AG04450 (cell line): ENCODE measurements at regions of chr6 and their contacts with region 1.

Region 1: DNA sequence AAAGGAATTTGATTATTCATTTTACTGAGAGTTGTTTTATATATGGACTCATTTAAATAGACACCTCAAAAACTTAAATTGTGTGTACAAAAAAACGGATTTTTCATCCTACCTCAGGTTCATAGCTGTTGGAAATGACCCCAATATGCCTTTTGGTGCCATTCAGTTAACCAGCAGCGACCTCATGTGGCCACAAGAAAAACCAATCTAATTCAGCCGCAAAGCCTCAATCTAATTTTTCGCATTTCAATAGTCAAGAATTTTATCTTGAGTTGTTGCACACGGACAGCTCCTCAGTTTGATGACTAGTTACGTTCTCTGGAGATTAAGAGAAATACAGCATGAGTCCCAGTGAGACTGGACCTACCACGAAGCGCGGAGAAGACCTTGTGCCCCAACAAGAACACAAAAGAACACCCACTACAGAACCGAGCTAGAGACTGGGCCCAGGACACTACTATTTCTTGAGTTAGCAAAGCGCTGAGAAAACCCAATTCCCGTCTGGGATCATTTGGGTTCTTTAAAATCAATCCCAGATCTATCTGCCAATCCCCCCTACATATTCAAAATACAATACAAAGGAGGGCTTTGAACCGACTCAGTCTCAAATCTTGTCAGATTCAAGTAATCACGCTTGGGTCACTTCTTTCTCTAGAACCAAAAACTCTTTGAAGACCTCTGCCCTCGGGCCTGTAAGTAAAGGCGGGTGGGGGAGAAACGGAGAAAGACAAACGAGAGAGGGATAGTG is 1.1 kb downstream of the TCP11 start:
- DNase-seq: peak; percentile 56
- H3K4me3 ChIP-seq: no peak overlapping the region
- H3K27ac ChIP-seq: no peak overlapping the region
- H3K27me3 ChIP-seq: no peaks in the 10 kb centered on the region
- CTCF ChIP-seq: peak; percentile 80

Region 2: DNA sequence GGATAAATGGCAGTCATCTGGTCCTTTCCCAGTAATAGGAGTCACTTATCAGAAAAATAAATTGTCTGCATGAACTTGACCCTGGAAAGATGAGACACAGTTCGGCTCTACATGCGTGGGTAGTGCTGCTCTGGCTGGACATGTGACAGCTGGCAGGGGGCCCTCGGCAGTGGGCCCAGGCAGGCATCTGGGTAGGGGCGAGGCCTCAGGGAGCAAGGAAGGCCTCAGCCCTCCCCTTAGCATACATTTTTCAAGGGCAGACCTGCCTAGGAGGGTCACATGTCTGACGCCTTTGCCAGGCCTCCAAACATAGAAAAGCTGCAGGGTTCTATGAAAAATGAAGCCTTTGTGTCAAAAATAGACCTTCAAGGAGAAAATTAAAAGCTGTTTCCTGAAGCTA is 430.7 kb before region 1 on chr6:
- CTCF ChIA-PET with region 1: no interaction called
- POLR2A ChIA-PET with region 1: no interaction called
- DNase-seq: peak; percentile 33
- H3K4me3 ChIP-seq: no peak overlapping the region
- H3K27ac ChIP-seq: no peak overlapping the region
- H3K27me3 ChIP-seq: no peaks in the 10 kb centered on the region
- CTCF ChIP-seq: no peak

Region 3: DNA sequence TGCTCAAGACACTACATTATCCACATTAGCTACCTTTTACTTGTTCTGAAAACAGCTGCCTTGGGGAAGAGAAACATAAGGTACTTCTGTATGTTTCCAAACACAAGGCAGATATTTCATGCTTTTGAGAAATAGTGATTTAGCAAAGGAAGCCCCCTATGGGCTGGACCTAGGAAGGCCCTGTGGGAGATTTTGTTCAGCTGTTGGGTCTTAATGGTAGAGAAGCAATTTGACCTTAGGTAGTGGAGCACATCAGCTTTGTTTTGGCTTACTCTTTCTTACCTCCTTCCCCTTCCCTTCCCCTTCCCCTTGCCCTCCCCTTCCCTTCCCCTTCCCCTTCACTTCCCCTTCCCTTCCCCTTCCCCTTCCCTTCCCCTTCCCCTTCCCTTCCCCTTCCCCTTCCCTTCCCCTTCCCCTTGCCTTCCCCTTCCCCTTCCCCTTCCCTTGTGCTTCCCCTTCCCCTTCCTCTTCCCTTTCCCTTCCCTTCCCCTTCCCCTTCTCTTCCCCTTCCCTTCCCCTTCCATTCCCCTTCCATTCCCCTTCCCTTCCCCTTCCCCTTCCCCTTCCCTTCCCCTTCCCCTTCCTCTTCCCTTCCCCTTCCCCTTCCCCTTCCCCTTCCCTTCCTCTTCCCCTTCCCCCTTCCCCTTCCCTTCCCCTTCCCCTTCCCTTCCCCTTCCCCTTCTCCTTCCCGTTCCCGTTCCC is 166.4 kb before region 1 on chr6:
- CTCF ChIA-PET with region 1: interaction called, 19 read pairs
- POLR2A ChIA-PET with region 1: no interaction called
- DNase-seq: no peak
- H3K4me3 ChIP-seq: no peak overlapping the region
- H3K27ac ChIP-seq: no peak overlapping the region
- H3K27me3 ChIP-seq: no peaks in the 10 kb centered on the region
- CTCF ChIP-seq: 0 out of 2 replicates have a peak, but pooled peaks have one; percentile 9

Region 4: DNA sequence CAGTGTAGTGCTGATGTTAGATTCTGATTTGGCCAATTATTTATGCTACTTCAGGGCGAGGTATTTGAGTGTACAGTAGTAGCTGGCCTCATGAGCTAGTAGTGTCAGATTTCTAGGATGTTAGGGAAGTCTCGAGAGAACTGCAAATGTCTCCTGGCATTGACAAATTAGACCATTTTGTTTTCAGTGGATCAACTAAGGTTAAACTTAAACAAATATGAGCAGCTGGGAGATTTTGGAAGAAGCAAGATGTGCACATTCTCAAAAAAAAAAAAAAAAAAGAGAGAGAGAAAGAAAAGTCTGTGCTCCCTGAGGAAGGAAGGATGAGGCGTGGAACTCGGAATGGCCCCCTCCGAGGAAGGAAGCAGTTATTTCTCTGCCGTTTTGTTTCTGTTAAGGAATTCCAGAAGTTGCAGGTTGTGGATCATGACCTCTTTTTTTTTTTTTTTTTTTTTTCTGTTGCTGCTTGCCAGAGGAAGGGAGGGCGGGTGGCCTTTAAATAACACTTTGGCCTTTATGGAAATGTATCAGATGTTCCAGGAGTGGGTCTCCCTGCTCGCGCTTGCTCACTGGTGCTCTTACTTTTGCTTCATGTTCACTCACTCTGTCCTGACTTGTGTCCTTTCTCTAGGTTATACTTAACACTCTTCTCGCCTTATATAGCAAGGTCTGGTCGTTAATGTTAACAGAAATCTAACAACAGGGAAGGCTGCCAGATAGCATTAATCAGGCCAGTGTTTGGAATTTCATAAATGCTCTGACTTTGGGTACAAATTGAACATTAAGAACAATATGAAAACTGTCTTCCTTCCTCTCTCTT is 123.4 kb before region 1 on chr6:
- CTCF ChIA-PET with region 1: interaction called, 12 read pairs
- POLR2A ChIA-PET with region 1: no interaction called
- DNase-seq: peak; percentile 80
- H3K4me3 ChIP-seq: peak overlapping the region; percentile 49
- H3K27ac ChIP-seq: peak overlapping the region; percentile 81
- H3K27me3 ChIP-seq: no peaks in the 10 kb centered on the region
- CTCF ChIP-seq: no peak

Region 5: DNA sequence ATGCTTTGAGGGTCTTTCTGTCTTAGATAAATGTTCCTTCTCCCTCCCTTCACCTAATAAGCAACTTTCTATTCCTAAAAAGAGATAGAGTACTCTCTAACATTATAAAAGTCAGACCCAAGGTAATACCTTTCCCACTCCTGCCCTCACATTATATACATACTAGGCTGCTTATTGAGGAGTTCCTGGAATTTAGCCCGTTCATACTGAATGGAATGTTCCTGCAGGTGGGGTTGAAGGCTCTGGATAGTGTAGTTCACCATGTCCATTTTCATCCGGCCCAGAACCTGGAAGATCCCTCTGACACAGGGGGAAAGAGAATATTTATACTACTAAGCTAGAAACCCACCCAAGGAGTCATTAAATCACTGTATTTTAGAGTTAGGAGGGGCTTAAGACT is 19.3 kb before region 1 on chr6:
- CTCF ChIA-PET with region 1: interaction called, 11 read pairs
- POLR2A ChIA-PET with region 1: no interaction called
- DNase-seq: no peak
- H3K4me3 ChIP-seq: no peak overlapping the region
- H3K27ac ChIP-seq: no peak overlapping the region
- H3K27me3 ChIP-seq: peaks cover 6% of the 10 kb centered on the region
- CTCF ChIP-seq: no peak

Region 6: DNA sequence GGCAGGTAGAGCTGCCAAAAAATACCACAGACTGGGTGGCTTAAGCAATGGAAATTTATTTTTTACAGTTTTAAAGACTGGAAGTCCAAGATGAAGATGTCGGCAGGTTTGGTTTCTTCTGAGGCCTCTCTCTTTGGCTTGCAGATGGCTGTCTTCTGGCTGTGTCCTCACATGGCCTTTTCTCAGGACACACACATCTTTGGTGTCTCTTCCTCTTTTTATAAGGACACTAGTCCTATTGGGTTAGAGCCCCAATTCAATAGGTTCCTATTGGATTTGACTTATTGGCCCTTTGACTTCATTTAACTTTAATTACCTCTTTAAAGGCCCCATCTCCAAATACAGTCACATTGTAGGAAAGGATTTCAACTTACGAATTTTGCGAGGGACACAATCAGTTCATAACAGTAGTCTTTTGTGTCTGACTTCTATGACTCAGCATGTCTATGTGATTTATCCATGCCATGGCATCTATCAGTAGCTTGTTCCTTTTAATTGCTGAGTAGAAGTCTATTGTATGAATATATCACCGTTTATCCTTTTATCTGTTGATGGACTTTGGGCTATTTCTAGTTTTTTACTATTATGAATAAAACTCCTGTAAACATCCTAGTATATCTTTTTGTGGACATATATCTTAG is 12.1 kb after region 1 on chr6:
- CTCF ChIA-PET with region 1: interaction called, 18 read pairs
- POLR2A ChIA-PET with region 1: no interaction called
- DNase-seq: no peak
- H3K4me3 ChIP-seq: no peak overlapping the region
- H3K27ac ChIP-seq: no peak overlapping the region
- H3K27me3 ChIP-seq: no peaks in the 10 kb centered on the region
- CTCF ChIP-seq: no peak

Region 7: DNA sequence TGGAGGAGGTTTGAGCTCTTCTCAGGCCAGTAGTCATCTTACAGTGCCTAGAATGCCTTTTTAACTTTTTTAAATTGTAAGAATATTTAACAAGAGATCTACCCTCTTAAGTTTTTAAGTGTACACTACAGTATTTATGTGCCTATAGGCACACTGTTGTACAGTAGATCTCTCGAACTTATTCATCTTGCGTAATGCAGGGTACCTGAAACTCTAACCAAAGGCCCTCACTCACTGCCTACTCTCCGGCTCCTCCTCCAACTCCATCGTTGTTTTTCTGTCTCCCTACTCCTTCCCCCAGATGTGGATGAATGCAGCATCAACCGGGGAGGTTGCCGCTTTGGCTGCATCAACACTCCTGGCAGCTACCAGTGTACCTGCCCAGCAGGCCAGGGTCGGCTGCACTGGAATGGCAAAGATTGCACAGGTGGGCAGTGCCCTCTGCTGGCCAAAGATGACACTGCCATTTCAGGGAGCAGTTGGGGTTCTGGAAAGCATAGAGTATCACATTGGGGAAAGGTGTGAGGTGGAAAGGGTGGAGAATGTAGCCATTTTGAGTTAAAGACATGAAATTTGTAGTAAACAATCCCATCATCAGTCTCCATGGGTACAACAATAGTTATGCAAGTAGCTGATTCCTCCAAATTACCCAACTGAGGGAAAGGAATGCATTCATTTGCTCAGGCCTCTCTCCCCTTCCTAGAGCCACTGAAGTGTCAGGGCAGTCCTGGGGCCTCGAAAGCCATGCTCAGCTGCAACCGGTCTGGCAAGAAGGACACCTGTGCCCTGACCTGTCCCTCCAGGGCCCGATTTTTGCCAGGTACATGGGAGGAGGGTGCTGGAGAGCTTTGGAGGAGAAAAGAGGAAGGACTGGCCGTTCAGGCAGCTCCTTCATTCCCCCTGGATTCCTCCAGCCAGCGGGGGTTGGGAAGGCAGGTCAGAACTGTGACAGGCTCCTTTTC is 101.0 kb after region 1 on chr6:
- CTCF ChIA-PET with region 1: interaction called, 62 read pairs
- POLR2A ChIA-PET with region 1: no interaction called
- DNase-seq: no peak
- H3K4me3 ChIP-seq: no peak overlapping the region
- H3K27ac ChIP-seq: no peak overlapping the region
- H3K27me3 ChIP-seq: no peaks in the 10 kb centered on the region
- CTCF ChIP-seq: peak; percentile 97